CD8-positive, alpha-beta T cell (primary cell): ENCODE measurements at regions of chr12 and their contacts with region 1.

Region 1: GRCh38 chr12:89882050-89882449 is 173.4 kb upstream of the ATP2B1 start:
- DNase-seq: peak in 2 of 9 experiments; percentile 30 to 52
- ATAC-seq: peak; percentile 37
- H3K4me3 ChIP-seq: no peak overlapping the region
- H3K4me3 Mint-ChIP-seq: no peak overlapping the region
- H3K27ac ChIP-seq: peak overlapping the region; percentile 47 to 76
- H3K27ac Mint-ChIP-seq: peak overlapping the region; percentile 95
- H3K4me1 ChIP-seq: peaks cover 49% of the 10 kb centered on the region
- H3K4me1 Mint-ChIP-seq: peaks cover 60% of the 10 kb centered on the region
- H3K27me3 ChIP-seq: no peaks in the 10 kb centered on the region
- H3K27me3 Mint-ChIP-seq: no peaks in the 10 kb centered on the region
- CTCF ChIP-seq: no peak

Region 2: GRCh38 chr12:89574736-89575208 is 307.3 kb before region 1 on chr12:
- CTCF ChIA-PET with region 1: no interaction called
- POLR2A ChIA-PET with region 1: no interaction called
- intact Hi-C with region 1: no loop called
- DNase-seq: no peak
- ATAC-seq: no peak
- H3K4me3 ChIP-seq: no peak overlapping the region
- H3K4me3 Mint-ChIP-seq: no peak overlapping the region
- H3K27ac ChIP-seq: no peak overlapping the region
- H3K27ac Mint-ChIP-seq: no peak overlapping the region
- H3K4me1 ChIP-seq: no peaks in the 10 kb centered on the region
- H3K4me1 Mint-ChIP-seq: no peaks in the 10 kb centered on the region
- H3K27me3 ChIP-seq: no peaks in the 10 kb centered on the region
- H3K27me3 Mint-ChIP-seq: no peaks in the 10 kb centered on the region
- CTCF ChIP-seq: no peak

Region 3: GRCh38 chr12:89768586-89769486 is 113.2 kb before region 1 on chr12:
- CTCF ChIA-PET with region 1: no interaction called
- POLR2A ChIA-PET with region 1: no interaction called
- intact Hi-C with region 1: loop called in 1 of 2 experiments (anchors 5 kb)
- DNase-seq: peak in 1 of 9 experiments; percentile 41
- ATAC-seq: no peak
- H3K4me3 ChIP-seq: no peak overlapping the region
- H3K4me3 Mint-ChIP-seq: no peak overlapping the region
- H3K27ac ChIP-seq: no peak overlapping the region
- H3K27ac Mint-ChIP-seq: no peak overlapping the region
- H3K4me1 ChIP-seq: peaks cover 9% of the 10 kb centered on the region
- H3K4me1 Mint-ChIP-seq: peaks cover 35% of the 10 kb centered on the region
- H3K27me3 ChIP-seq: no peaks in the 10 kb centered on the region
- H3K27me3 Mint-ChIP-seq: no peaks in the 10 kb centered on the region
- CTCF ChIP-seq: no peak

Region 4: GRCh38 chr12:89893972-89894706 is 12.1 kb after region 1 on chr12:
- CTCF ChIA-PET with region 1: no interaction called
- POLR2A ChIA-PET with region 1: interaction called, 3 read pairs
- intact Hi-C with region 1: loop called in 1 of 2 experiments (anchors 1 kb)
- DNase-seq: no peak
- ATAC-seq: no peak
- H3K4me3 ChIP-seq: no peak overlapping the region
- H3K4me3 Mint-ChIP-seq: no peak overlapping the region
- H3K27ac ChIP-seq: no peak overlapping the region
- H3K27ac Mint-ChIP-seq: no peak overlapping the region
- H3K4me1 ChIP-seq: peaks cover 10% of the 10 kb centered on the region
- H3K4me1 Mint-ChIP-seq: peaks cover 23% of the 10 kb centered on the region
- H3K27me3 ChIP-seq: no peaks in the 10 kb centered on the region
- H3K27me3 Mint-ChIP-seq: no peaks in the 10 kb centered on the region
- CTCF ChIP-seq: no peak

Region 5: GRCh38 chr12:89918181-89918868 is 36.3 kb after region 1 on chr12:
- CTCF ChIA-PET with region 1: no interaction called
- POLR2A ChIA-PET with region 1: no interaction called
- intact Hi-C with region 1: loop called in 1 of 2 experiments (anchors 5 kb)
- DNase-seq: peak in 2 of 9 experiments; percentile 15 to 34
- ATAC-seq: no peak
- H3K4me3 ChIP-seq: no peak overlapping the region
- H3K4me3 Mint-ChIP-seq: no peak overlapping the region
- H3K27ac ChIP-seq: no peak overlapping the region
- H3K27ac Mint-ChIP-seq: no peak overlapping the region
- H3K4me1 ChIP-seq: no peaks in the 10 kb centered on the region
- H3K4me1 Mint-ChIP-seq: peaks cover 4% of the 10 kb centered on the region
- H3K27me3 ChIP-seq: no peaks in the 10 kb centered on the region
- H3K27me3 Mint-ChIP-seq: no peaks in the 10 kb centered on the region
- CTCF ChIP-seq: no peak

Region 6: DNA sequence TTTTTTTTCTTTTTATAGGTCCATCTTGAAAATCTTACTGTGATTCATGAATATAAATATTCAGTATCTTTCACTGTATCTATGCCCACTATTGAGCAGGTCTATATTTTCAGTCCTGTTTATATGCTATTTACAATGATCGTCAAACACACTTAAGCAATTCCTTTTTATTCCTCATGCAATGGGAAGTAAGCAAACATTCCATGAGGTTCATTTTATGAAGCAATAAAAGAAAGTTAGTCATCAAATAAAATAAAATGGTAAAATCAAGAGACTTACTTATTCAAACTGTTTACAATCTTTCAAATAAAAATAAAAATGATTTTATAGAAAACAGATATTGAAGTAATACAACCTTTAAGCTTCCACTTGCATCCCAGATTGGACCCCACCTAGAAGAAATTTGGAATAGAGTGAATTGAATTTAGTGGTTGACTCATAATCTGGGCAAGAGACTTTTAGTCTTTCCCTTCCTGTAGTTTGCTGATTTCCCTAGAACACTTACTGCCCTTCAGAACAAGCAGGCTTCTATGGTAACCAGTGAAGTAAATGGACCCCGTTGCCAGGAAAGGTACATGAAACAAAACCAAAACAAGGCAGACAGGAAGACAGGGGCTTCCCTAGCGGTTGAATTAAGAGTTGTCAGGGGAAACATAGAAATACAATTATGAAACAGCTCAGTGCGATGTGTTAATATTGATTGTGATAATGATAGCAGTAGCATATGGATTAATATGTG is 67.6 kb after region 1 on chr12:
- CTCF ChIA-PET with region 1: no interaction called
- POLR2A ChIA-PET with region 1: interaction called, 4 read pairs
- intact Hi-C with region 1: loop called (anchors 1 to 5 kb)
- DNase-seq: peak in 8 of 9 experiments; percentile 23 to 95 (median 55)
- ATAC-seq: peak; percentile 90
- H3K4me3 ChIP-seq: no peak overlapping the region
- H3K4me3 Mint-ChIP-seq: peak overlapping the region; percentile 53
- H3K27ac ChIP-seq: peak overlapping the region; percentile 25 to 53
- H3K27ac Mint-ChIP-seq: peak overlapping the region; percentile 75
- H3K4me1 ChIP-seq: peaks cover 36% of the 10 kb centered on the region
- H3K4me1 Mint-ChIP-seq: peaks cover 47% of the 10 kb centered on the region
- H3K27me3 ChIP-seq: no peaks in the 10 kb centered on the region
- H3K27me3 Mint-ChIP-seq: no peaks in the 10 kb centered on the region
- CTCF ChIP-seq: peak; percentile 45